GM12878 (cell line): ENCODE measurements at regions of chr2 and their contacts with region 1.

Region 1: DNA sequence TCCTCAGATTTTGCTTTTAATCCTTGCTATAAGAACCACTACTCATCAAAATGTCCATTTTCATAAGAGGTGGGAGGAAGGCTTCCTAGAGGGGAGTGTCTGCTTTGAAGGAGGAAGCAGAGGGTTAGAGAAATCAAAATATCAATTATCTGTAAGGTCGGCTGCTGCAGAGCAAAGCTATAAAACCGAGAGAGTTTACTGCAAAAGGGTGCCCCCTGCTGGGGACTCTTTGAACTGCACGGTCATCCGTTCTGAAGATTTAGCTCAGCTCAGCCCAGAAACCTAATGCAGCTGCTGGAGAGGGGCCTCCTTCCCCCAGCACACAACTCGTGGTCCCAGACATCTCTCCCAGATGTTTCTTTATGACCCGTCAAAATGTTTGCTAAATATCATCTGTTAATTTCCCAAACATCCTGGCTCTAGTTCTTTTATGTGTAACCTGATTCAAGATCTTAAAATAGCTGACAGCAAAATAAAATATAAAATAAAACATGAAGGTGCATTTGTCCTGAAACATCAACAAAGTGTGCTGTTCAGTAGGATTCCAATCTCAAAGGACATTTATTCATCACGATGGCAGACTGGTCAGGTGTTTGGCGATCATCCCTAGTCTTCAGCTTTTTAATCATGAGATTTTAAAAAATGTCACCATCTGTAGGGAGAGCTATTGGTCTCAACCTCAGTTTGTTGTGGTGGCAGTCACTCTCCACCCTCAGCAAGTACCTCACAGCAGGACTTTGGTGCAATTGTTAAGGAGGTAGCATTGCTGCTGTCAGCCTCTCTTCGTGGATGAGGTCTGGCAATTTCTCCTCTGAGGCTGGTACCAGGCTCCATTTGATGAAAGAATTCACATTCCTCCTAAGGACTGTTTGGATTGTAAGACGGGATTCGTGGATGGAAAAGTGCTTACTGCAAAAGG is 185.9 kb downstream of the MTX2 start:
- DNase-seq: no peak
- ATAC-seq: peak; percentile 93
- H3K4me3 ChIP-seq: no peak overlapping the region
- H3K27ac ChIP-seq: no peak overlapping the region
- H3K4me1 ChIP-seq: no peaks in the 10 kb centered on the region
- H3K27me3 ChIP-seq: no peaks in the 10 kb centered on the region
- CTCF ChIP-seq: peak; percentile 75 to 84 (median 80)
- EP300 ChIP-seq: no peak; a peak in 1 of 4 replicates
- POLR2A ChIP-seq: no peak
- RAD21 ChIP-seq: peak; percentile 75

Region 2: DNA sequence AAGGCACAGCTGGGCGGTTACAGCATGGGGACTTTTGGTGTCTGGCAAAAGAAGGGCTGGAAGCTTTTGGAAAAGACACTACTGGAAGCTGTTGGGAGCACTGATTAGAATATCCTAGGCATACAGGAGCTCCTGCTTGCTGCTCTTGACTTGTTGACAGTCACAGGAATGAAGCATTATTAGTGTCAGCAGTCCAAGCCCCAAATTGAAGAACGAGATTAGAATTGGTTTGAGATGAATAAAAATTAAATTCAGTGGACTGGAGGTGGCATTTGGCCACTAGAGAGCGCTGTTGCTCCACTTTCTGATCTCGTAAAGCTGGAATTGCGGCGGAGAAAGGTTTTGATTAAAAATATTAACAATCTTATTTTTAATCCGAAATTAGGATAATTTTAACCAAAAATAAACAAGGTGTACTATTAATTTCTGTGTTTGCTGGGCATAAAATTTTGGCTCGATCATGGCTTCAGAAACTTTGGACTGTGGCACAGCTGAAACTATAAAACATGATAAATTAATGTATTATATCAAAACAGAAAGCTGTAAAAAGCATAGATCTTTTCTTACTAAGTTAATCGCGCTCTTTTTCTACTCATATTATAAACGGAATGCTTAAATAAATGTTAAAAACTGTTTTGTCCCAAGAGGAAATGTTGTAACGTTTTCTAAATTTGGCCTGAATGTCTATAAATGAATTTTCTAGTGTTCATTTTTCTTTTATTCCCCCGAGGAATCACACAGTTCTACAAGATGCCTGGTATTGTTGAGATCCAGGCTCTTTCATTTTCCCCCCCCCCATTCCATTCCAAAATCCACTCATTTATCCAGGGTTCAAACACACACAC is 328.0 kb before region 1 on chr2:
- CTCF ChIA-PET with region 1: interaction called, 44 read pairs
- POLR2A ChIA-PET with region 1: no interaction called
- RAD21 ChIA-PET with region 1: interaction called, 19 read pairs
- SMC1A ChIA-PET with region 1: interaction called, 18 read pairs
- in situ Hi-C with region 1: no loop called
- intact Hi-C with region 1: loop called (anchors 2 kb)
- DNase-seq: no peak
- ATAC-seq: peak; percentile 49; the same call in 2 of the 3 replicates
- H3K4me3 ChIP-seq: no peak overlapping the region
- H3K27ac ChIP-seq: no peak overlapping the region
- H3K4me1 ChIP-seq: no peaks in the 10 kb centered on the region
- H3K27me3 ChIP-seq: peaks cover 7 to 29% of the 10 kb centered on the region in 2 experiments
- CTCF ChIP-seq: peak; percentile 61 to 77 (median 66)
- EP300 ChIP-seq: no peak
- POLR2A ChIP-seq: no peak
- RAD21 ChIP-seq: peak; percentile 81

Region 3: DNA sequence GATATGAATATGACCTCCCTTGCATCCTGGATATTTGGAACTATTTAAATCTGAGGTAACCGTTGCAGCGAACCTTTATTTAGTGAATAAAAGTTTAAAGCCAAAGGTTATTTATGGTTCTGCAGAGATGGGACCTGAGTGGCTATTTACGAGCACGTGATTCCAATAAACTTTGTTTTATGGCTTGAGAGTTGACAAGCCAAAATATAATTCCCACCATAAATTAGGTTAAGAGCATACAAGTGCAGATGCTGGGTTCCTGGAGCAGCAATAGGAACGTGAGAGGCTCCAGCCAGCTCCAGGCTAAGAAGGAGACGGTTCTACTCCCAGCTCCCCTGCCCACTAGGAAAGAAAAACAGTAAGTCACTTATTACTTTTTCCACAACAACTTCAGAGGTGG is 309.1 kb before region 1 on chr2:
- CTCF ChIA-PET with region 1: interaction called, 157 read pairs
- POLR2A ChIA-PET with region 1: no interaction called
- RAD21 ChIA-PET with region 1: interaction called, 76 read pairs
- SMC1A ChIA-PET with region 1: interaction called, 47 read pairs
- in situ Hi-C with region 1: loop called (anchors 5 kb)
- intact Hi-C with region 1: no loop called
- DNase-seq: no peak
- ATAC-seq: no peak
- H3K4me3 ChIP-seq: no peak overlapping the region
- H3K27ac ChIP-seq: no peak overlapping the region
- H3K4me1 ChIP-seq: no peaks in the 10 kb centered on the region
- H3K27me3 ChIP-seq: peaks cover 10 to 28% of the 10 kb centered on the region in 2 experiments
- CTCF ChIP-seq: no peak
- EP300 ChIP-seq: no peak
- POLR2A ChIP-seq: no peak
- RAD21 ChIP-seq: no peak

Region 4: DNA sequence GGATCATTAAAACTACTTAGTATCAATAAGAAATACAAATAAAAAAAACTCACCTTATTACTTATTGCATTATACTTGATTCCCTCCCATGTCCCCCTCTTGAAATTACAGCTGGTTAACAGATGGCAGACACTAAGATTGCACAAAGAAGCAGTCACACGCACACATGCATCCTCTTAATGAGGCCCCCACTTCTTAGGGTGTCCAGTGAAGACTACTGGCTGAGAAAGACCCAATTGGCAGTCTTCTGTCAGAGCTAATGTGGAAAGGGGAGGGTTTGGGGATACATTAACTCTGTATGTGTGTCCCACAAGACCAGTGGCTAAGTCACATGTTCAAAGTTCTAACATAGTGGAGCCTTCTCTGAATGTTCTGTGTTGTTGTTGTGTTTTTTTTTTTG is 24.8 kb after region 1 on chr2:
- CTCF ChIA-PET with region 1: interaction called, 29 read pairs
- POLR2A ChIA-PET with region 1: no interaction called
- RAD21 ChIA-PET with region 1: interaction called, 8 read pairs
- SMC1A ChIA-PET with region 1: interaction called, 3 read pairs
- in situ Hi-C with region 1: no loop called
- intact Hi-C with region 1: no loop called
- DNase-seq: no peak
- ATAC-seq: no peak
- H3K4me3 ChIP-seq: no peak overlapping the region
- H3K27ac ChIP-seq: no peak overlapping the region
- H3K4me1 ChIP-seq: no peaks in the 10 kb centered on the region
- H3K27me3 ChIP-seq: no peaks in the 10 kb centered on the region; a peak in 2 of 4 replicates
- CTCF ChIP-seq: no peak
- EP300 ChIP-seq: no peak
- POLR2A ChIP-seq: no peak
- RAD21 ChIP-seq: no peak

Region 5: GRCh38 chr2:176554101-176555048 is 99.2 kb after region 1 on chr2:
- CTCF ChIA-PET with region 1: interaction called, 127 read pairs
- POLR2A ChIA-PET with region 1: interaction called, 5 read pairs
- RAD21 ChIA-PET with region 1: interaction called, 89 read pairs
- SMC1A ChIA-PET with region 1: interaction called, 78 read pairs
- in situ Hi-C with region 1: no loop called
- intact Hi-C with region 1: loop called (anchors 5 kb)
- DNase-seq: peak; percentile 8
- ATAC-seq: peak; percentile 79
- H3K4me3 ChIP-seq: peak overlapping the region; percentile 32; the same call in 1 of the 2 replicates
- H3K27ac ChIP-seq: no peak overlapping the region
- H3K4me1 ChIP-seq: no peaks in the 10 kb centered on the region
- H3K27me3 ChIP-seq: 0 out of 4 replicates have a peak, but pooled peaks cover 0 to 3% of the 10 kb centered on the region in 2 experiments
- CTCF ChIP-seq: peak; percentile 58 to 78 (median 70)
- EP300 ChIP-seq: no peak
- POLR2A ChIP-seq: no peak
- RAD21 ChIP-seq: peak; percentile 82

Region 6: DNA sequence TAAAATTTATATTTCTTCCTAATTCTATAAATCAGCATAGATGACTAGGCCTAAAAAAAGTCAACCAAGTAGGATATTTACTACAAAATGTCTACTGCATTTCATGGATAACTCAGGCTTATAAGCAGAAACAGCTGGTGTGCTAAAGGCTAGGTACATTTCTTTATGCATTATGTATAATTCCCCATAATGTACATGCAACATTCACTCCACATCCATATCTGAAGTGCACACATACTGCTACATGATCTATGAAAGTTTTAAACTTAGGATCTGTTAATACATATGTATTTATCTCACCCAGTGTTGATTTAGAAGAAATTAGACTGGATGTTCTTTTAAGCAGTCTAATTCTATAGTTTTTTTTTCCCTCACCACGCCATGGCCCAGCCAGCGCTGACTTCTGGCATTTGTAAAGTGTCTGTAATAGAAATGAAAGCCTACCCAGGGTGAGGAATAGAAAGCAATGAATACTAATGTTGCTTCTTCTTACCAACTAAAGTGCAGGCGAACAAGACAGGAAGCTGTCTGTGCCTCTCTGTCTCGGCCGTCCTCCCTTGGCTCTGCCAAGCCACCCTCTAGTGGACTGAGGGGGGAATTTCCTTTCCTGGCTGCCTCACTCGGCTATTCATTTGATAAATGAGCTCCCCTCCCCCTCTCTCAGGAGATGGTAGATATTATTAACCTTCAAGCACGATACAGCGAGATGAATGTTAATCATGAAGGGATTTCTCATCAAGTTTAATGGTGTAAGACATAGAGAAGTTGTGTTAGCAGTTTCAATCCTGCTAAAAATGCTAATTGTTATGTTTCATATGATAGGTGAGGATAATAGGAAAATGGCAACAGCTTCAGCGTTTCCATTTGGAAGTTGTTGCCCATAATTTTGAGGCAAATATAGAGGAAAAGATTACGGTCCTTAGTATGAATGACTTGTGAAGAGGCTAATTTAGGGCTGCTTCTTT is 198.6 kb after region 1 on chr2:
- CTCF ChIA-PET with region 1: interaction called, 36 read pairs
- POLR2A ChIA-PET with region 1: no interaction called
- RAD21 ChIA-PET with region 1: interaction called, 17 read pairs
- SMC1A ChIA-PET with region 1: interaction called, 28 read pairs
- in situ Hi-C with region 1: no loop called
- intact Hi-C with region 1: no loop called
- DNase-seq: no peak
- ATAC-seq: peak; percentile 97
- H3K4me3 ChIP-seq: no peak overlapping the region
- H3K27ac ChIP-seq: no peak overlapping the region
- H3K4me1 ChIP-seq: no peaks in the 10 kb centered on the region
- H3K27me3 ChIP-seq: no peaks in the 10 kb centered on the region; a peak in 1 of 4 replicates
- CTCF ChIP-seq: peak; percentile 60 to 76 (median 62)
- EP300 ChIP-seq: no peak
- POLR2A ChIP-seq: no peak
- RAD21 ChIP-seq: peak; percentile 43